ENCODE measurements at regions of chr17 and their contacts with region 1.

Region 1: DNA sequence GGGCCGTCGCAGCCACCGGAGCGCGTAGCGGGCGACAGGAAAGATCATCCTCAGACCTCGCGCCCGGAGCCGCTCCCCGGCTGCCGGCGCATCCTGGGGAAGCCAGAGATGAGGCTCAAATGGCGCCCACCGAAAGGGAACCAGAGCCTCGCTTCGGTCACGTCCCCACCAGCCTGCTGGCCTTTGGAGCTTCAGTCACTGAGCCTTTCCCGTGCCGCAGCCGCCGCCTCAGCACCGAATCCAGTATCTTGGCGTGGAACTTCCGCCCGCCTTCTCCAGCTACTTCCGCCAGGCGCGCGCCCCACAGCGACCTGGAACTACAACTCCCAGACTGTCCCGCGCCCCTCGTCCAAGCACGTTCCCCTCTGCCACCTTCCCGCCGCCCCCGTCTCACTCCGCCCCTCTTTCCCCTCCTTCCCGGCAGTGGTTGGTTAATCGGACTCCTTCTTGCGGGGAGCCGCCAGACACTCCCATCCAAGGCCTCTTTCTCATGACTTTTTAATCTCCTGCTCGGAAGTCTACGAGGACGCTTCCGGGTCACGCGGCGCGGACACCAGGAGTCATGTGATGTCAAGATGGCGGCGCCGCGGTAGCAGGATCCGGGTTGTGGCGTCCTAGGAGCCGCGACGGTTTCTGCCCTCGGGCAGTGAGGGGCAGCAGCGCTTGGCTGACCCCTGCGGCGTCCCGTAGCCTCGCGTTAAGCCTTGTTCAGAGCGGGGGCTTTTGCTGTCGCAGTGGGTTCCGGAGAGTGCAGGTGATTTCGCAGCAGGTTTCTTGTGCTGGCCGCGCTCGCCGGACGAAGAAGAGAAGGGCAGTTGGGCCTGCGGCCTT is at the starts of genes SMCR8 and TOP3A:
- DNase-seq: peak; percentile 98
- H3K4me3 Mint-ChIP-seq: peak within 1 kb of the TSS; percentile 87
- H3K27ac Mint-ChIP-seq: peak within 1 kb of the TSS; percentile 87
- H3K4me1 Mint-ChIP-seq: peaks cover 22% of the 10 kb centered on the region
- H3K27me3 Mint-ChIP-seq: no peaks in the 10 kb centered on the region
- CTCF ChIP-seq: no peak
- total RNA-seq, gene SMCR8: 10.9 and 16.8 TPM in 2 replicates
- total RNA-seq, gene TOP3A: 32.5 and 35.3 TPM in 2 replicates

Region 2: GRCh38 chr17:18217412-18218015 is 97.4 kb before region 1 on chr17:
- CTCF ChIA-PET with region 1: interaction called, 4 read pairs
- POLR2A ChIA-PET with region 1: interaction called, 6 read pairs
- intact Hi-C with region 1: loop called (anchors 5 kb)
- DNase-seq: peak; percentile 72
- H3K4me3 Mint-ChIP-seq: no peak overlapping the region
- H3K27ac Mint-ChIP-seq: no peak overlapping the region
- H3K4me1 Mint-ChIP-seq: peaks cover 4% of the 10 kb centered on the region
- H3K27me3 Mint-ChIP-seq: no peaks in the 10 kb centered on the region
- CTCF ChIP-seq: peak; percentile 88

Region 3: GRCh38 chr17:18248300-18248731 is 66.6 kb before region 1 on chr17:
- CTCF ChIA-PET with region 1: interaction called, 4 read pairs
- POLR2A ChIA-PET with region 1: no interaction called
- intact Hi-C with region 1: loop called (anchors 2 kb)
- DNase-seq: peak; percentile 83
- H3K4me3 Mint-ChIP-seq: no peak overlapping the region
- H3K27ac Mint-ChIP-seq: no peak overlapping the region
- H3K4me1 Mint-ChIP-seq: peaks cover 5% of the 10 kb centered on the region
- H3K27me3 Mint-ChIP-seq: no peaks in the 10 kb centered on the region
- CTCF ChIP-seq: peak; percentile 61

Region 4: DNA sequence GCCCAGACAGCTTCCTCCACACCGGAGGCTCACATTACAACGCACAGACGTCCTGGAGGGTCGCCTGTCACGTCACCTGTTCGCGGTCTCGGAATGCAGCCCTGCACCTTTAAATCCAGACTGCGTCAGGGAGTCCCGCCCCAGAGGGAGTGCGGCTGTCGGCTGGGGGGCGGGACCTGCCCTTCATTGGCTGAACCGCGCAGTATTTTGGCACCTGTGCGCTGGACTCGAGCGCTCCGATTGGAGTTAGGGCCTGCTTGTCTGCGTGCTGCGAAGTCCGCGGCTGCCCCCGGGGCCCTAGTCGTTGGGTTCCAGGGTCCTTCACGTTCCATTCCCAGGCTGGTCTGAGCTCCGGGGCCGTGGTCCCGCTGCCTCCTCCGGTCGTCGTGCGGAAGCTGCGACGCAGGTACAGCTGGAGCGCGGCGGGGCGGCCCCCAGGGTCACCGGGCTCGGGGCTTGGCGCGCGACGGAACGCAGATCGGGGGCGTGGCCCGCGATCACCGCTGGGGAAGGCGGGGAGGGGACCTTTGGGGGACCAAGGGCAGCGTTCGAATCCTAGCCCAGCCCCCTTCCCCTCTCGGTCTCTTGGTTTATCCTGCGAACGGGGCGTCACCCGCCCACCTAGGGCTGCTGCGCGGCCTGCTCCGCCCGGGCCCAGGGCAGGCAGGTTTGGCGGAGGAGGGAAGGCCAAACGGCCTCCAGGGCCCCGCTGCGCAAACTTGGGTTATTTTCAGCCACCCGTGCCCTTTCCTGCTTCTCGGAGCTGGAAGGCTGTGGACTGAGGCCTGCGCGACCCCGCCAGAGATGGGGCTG is 54.4 kb before region 1 on chr17 and contains the start of gene MIEF2:
- CTCF ChIA-PET with region 1: interaction called, 3 read pairs
- POLR2A ChIA-PET with region 1: interaction called, 10 read pairs
- intact Hi-C with region 1: loop called (anchors 2 kb)
- DNase-seq: peak; percentile 94
- H3K4me3 Mint-ChIP-seq: peak within 1 kb of the TSS; percentile 82
- H3K27ac Mint-ChIP-seq: peak within 1 kb of the TSS; percentile 79
- H3K4me1 Mint-ChIP-seq: peaks cover 11% of the 10 kb centered on the region
- H3K27me3 Mint-ChIP-seq: no peaks in the 10 kb centered on the region
- CTCF ChIP-seq: no peak
- total RNA-seq, gene MIEF2: 12.1 and 14.1 TPM in 2 replicates

Region 5: DNA sequence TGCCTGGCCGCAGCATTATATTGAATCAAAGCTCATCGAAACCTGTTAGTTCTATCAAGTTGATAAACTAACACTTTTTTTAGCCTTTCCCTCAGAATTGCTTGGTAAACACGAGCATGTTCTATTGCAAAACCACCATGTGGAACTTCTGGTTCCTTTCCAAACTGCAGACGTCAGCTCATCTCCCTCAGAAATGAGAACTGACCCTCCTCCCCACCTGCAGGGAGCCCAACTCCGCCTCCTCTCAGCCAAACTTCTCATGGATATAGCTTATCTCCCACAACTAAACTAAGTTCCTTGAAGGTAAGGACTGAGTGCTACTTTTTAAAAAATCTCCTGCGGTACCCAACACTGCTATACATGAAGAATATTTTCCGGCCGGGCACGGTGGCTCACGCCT is 41.7 kb after region 1 on chr17:
- CTCF ChIA-PET with region 1: no interaction called
- POLR2A ChIA-PET with region 1: no interaction called
- intact Hi-C with region 1: no loop called
- DNase-seq: peak; percentile 63
- H3K4me3 Mint-ChIP-seq: peak overlapping the region; percentile 40
- H3K27ac Mint-ChIP-seq: peak overlapping the region; percentile 80
- H3K4me1 Mint-ChIP-seq: peaks cover 10% of the 10 kb centered on the region
- H3K27me3 Mint-ChIP-seq: no peaks in the 10 kb centered on the region
- CTCF ChIP-seq: no peak

Measured in MCF 10A (cell line).